Heart right ventricle (tissue), 16 donors: ENCODE measurements at regions of chr17 and their contacts with region 1.

Region 1: DNA sequence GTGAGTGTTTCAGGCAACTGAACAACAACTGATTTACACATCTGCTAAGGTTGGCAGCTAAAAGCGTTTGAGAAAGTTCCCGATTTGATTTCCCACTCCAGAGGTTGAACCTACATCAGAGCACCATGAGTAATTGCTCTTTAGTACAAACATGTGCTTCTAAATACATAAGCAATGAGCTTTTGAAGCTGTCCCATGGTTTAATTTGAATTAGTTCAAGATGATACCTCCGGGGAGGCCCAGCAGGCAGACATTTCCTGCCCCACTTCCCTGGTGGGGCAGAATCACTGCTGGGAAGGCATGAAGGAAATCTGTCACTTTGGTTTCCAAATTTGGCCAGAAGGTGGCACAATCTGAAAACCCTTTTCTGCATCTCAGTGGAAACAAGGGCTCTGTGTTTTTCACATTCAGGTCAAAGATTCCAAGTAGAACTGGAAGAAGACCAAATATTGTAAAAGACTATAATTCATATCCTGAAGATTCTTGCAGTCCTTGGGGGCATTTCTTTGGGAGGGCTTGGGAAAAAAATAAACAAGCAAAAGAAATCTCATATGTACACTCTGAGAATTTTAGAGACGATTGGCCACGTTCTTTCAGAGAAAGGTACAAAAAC is 176.2 kb upstream of the FAM20A start:
- DNase-seq: peak; percentile 17 to 75
- ATAC-seq: peak; percentile 67 to 83 (median 76)
- H3K4me3 ChIP-seq: no peak overlapping the region
- H3K27ac ChIP-seq: peak overlapping the region; percentile 41 to 85 (median 70)
- H3K4me1 ChIP-seq: peaks cover 0 to 44% (median 34%) of the 10 kb centered on the region in 9 donors
- H3K27me3 ChIP-seq: no peaks in the 10 kb centered on the region
- CTCF ChIP-seq: peak; percentile 46 to 79 (median 73)

Region 2: GRCh38 chr17:68514831-68515635 is 262.3 kb before region 1 on chr17:
- intact Hi-C with region 1: no loop called
- DNase-seq: no peak
- ATAC-seq: peak in 2 of 8 donors; percentile 1 to 12
- H3K4me3 ChIP-seq: peak overlapping the region in 9 of 10 donors; percentile 65 to 90 (median 81)
- H3K27ac ChIP-seq: peak overlapping the region; percentile 26 to 100 (median 99)
- H3K4me1 ChIP-seq: peaks cover 5 to 80% (median 71%) of the 10 kb centered on the region in 9 donors
- H3K27me3 ChIP-seq: no peaks in the 10 kb centered on the region
- CTCF ChIP-seq: no peak

Region 3: DNA sequence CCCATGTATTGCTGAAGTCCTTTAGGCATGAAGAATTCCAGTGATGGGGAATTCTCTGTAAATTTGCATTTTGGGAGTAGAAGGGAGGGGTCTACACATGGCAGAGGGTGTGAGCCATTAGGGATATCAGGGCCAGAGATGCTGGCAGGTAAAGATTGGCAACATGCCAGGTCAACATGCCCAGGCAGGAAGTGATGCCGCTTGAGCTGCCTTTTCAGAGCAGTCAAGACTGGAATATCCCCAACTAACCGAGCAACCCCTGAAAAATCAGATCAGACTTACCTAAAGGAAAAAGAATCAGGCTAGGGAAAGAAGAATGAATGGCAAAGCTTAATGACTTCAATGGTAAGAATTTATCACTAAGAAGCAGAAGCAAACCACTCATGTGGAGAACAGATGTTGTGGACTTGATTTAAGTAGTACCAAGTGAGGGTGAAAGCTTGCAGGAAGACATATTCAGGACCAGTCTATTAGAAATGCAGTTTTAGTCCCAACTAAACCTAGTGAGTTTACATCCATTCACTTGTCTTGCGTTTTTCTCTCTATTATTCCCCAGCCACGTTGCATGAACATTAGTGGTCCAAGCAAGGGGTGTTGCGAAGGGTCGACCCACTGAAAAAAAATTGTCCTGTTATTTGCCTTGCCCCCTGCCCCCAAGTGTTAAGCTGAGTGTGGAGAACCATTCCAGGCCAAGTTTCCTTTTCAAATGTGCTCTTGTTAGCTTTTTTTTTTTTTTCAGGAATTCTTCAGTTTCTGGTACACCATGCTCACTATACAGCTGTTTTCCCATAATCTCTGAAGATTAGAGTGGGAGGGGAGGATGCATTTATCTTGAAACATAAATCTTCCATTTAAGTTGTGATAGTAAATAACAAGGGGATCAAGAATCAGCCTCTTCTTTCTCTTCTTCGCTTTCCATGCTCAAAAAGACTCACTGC is 72.6 kb after region 1 on chr17:
- intact Hi-C with region 1: loop called in 1 of 10 experiments (anchors 5 kb)
- DNase-seq: no peak
- ATAC-seq: no peak
- H3K4me3 ChIP-seq: no peak overlapping the region
- H3K27ac ChIP-seq: peak overlapping the region in 4 of 10 donors; percentile 6 to 77 (median 56)
- H3K4me1 ChIP-seq: peaks cover 0 to 27% (median 6%) of the 10 kb centered on the region in 9 donors
- H3K27me3 ChIP-seq: no peaks in the 10 kb centered on the region
- CTCF ChIP-seq: no peak

Region 4: GRCh38 chr17:68954863-68955841 is 177.8 kb after region 1 on chr17 and contains the start of gene ABCA8:
- intact Hi-C with region 1: loop called in 1 of 10 experiments (anchors 5 kb)
- DNase-seq: peak in 1 of 2 donors; percentile 63
- ATAC-seq: peak; percentile 65 to 93 (median 86)
- H3K4me3 ChIP-seq: peak within 1 kb of the TSS; percentile 9 to 60 (median 46)
- H3K27ac ChIP-seq: peak within 1 kb of the TSS; percentile 35 to 83 (median 58)
- H3K4me1 ChIP-seq: peaks cover 0 to 7% (median 0%) of the 10 kb centered on the region in 9 donors
- H3K27me3 ChIP-seq: no peaks in the 10 kb centered on the region
- CTCF ChIP-seq: no peak
- total RNA-seq, gene ABCA8: 21.5 to 93.0 (median 35.7) TPM

Region 5: DNA sequence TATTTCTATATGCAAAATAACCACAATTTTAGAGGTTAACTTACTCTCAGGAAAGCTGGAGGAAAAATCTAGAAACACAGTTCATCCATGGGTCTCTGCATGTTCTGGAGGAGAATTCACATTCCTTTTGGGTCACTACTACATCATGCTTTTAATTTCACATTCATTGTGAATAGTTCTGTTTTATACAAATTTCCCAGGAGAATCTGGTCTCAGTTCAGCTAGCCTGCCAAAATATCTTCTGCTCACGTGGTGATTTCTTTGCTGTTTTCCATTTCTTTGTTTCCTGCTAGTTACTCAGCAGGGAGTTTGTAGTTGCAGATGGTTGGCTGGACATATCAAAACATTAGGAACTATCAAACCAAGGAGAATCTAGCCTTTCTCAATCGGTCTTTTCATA is 283.5 kb after region 1 on chr17 and contains the start of gene ABCA9:
- intact Hi-C with region 1: loop called in 1 of 10 experiments (anchors 5 kb)
- DNase-seq: peak in 1 of 2 donors; percentile 33
- ATAC-seq: peak in 7 of 8 donors; percentile 79 to 89 (median 85)
- H3K4me3 ChIP-seq: peak within 1 kb of the TSS in 9 of 10 donors; percentile 2 to 44 (median 20)
- H3K27ac ChIP-seq: peak within 1 kb of the TSS; percentile 49 to 74 (median 58)
- H3K4me1 ChIP-seq: peaks cover 0 to 19% (median 9%) of the 10 kb centered on the region in 9 donors
- H3K27me3 ChIP-seq: peaks cover 0 to 1% (median 0%) of the 10 kb centered on the region in 7 donors
- CTCF ChIP-seq: no peak
- total RNA-seq, gene ABCA9: 4.5 to 38.6 (median 9.3) TPM

Region 6: DNA sequence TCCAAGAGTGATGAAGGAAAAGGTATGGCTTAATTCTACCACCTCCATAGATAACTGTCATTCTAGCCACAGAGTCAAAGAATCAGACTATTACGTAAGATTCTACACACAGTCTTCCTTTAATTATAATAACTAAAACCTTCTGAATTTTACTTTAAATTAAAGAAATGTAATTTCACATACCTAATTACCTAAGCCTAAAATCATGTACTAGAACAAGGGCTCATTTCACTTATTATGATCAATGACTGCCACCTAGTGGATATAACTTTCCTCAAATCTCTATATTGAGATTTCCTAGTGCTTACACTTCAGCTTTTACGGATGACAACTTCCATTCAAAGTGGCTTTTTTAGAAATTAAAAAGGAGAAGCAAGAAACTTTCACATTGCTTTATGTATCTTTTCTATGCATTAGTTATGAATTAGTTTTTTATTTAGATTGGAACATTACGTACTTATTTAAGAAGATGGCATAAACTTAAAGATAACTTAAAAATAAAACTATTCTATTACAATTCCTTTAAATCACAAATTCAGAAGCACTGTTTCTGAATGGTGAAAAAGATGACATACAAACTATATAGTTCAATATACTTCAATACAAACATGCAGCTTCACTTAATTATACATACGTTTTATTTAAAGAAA is 469.5 kb after region 1 on chr17:
- intact Hi-C with region 1: loop called in 1 of 10 experiments (anchors 5 kb)
- DNase-seq: no peak
- ATAC-seq: peak in 2 of 8 donors; percentile 35 to 45
- H3K4me3 ChIP-seq: no peak overlapping the region
- H3K27ac ChIP-seq: no peak overlapping the region
- H3K4me1 ChIP-seq: no peaks in the 10 kb centered on the region
- H3K27me3 ChIP-seq: no peaks in the 10 kb centered on the region
- CTCF ChIP-seq: peak; percentile 27 to 79 (median 65)